ENCODE measurements at regions of chr1 and their contacts with region 1.

Region 1: GRCh38 chr1:56584910-56585528 is 5.7 kb upstream of the PLPP3 start:
- DNase-seq: peak; percentile 45
- CTCF ChIP-seq: peak; percentile 67

Region 2: GRCh38 chr1:55284852-55285251 is 1300.2 kb before region 1 on chr1:
- CTCF ChIA-PET with region 1: interaction called, 26 read pairs
- POLR2A ChIA-PET with region 1: no interaction called
- DNase-seq: no peak
- CTCF ChIP-seq: peak; percentile 60

Region 3: DNA sequence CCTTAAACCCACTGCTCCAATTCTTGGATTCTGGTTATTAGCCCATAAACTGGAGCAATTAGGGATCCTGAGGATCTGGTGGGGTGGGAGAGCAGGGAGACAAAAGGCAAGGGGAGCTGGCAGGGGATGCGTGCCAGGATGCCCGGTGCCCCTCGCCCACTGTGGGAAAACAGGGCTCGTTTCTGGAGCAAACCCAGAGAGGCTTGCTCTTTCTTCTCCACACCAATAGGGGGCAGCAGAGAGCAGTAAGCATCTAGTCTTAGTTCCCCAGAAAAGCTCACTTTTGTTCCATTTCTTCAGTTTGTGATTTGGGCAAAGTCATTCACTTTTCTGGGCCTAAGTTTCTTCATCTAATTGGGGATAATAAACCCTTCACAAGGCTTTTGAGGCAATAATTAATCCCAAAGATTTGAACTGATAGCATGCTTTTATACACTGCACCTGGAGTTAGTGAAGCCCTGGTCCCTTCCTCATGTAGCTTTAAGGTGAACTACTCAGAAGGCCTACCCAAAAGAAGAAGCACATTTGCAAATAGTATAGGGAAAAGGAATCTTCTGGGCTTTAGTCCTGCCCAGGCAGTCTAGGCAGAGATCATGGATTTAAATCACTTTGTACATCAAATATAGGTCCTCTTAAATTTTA is 1209.3 kb before region 1 on chr1:
- CTCF ChIA-PET with region 1: interaction called, 23 read pairs
- POLR2A ChIA-PET with region 1: no interaction called
- DNase-seq: peak; percentile 68
- CTCF ChIP-seq: peak; percentile 78

Region 4: DNA sequence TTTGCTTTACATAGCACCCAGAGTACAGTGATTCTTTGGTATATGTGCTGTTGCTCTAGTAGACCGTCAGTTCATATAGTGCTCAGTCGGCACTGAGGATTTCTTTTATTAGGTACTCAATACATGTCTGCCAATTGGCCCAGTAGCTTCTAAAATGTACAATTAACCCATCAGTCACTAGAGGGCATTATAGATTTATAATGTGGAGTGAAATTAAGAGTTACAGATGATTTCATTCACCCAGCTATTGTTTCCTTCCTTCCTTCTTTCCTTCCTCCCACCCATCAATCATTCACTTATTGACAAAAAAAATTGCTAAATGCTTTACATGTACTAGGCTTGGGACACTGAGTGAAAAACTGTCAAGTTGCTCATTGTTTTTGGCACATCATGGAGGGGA is 1106.3 kb before region 1 on chr1:
- CTCF ChIA-PET with region 1: interaction called, 15 read pairs
- POLR2A ChIA-PET with region 1: no interaction called
- DNase-seq: no peak
- CTCF ChIP-seq: no peak

Region 5: DNA sequence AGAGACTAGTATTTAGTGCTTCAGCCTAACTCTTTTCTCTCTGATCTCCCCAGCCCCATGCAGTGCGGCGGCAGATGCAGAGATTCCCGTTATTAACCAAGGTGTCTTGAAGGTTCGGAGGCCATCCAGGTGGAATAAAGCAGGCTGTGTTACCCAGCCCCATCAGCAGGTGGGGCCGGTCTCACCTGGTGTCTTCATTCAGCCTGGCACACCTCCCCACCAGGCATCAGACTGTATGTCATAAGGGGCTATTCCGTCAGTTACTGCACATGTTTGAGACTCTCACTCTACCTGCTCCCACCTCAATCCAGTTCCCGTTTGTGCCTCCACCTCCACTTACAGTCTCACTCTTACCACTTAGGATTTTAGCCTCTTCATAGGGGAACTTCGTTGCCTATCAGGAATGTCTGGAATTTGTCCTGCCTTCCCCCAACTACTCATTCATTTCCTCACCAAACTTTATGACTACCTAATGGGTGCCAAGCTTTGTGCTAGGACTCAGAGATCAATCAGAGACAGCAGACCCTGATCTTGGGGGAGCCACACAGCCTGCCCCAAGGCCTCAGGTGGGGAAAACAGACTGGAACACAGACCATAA is 175.8 kb before region 1 on chr1:
- CTCF ChIA-PET with region 1: interaction called, 35 read pairs
- POLR2A ChIA-PET with region 1: no interaction called
- DNase-seq: peak; percentile 40
- CTCF ChIP-seq: peak; percentile 28